ENCODE measurements at regions of chr1 and their contacts with region 1.

Region 1: DNA sequence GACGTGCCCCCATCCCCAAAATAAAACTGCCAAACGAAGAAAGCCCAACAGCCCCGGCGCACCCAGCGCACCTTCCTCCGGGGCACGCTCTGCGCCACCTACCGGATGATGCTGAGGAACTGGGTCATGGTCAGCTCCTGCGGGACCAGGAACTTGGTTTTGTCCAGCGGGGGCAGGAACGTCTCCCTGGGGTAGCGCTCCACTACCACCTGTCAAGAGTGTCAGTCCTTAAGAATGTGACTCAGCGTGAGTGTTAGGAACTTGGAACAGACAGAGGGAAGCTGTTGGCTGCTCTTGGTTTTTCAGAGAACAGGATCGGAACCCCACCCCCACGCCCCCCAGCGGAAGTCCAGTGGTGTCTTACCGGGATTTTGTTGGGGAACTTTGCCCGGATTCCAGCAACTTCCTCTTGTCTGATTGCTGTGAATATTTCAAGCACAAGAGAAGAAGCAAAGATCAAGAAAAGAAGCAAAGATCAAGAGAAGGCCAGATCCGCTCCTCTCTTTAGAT is 431 bp downstream of the MAP1LC3C start:
- DNase-seq: no peak
- H3K4me3 ChIP-seq: peak overlapping the region; percentile 32
- H3K27me3 ChIP-seq: no peaks in the 10 kb centered on the region
- CTCF ChIP-seq: peak; percentile 83

Region 2: GRCh38 chr1:241888232-241888631 is 110.2 kb before region 1 on chr1:
- CTCF ChIA-PET with region 1: interaction called, 11 read pairs
- POLR2A ChIA-PET with region 1: no interaction called
- DNase-seq: no peak
- H3K4me3 ChIP-seq: no peak overlapping the region
- H3K27me3 ChIP-seq: no peaks in the 10 kb centered on the region
- CTCF ChIP-seq: no peak

Region 3: DNA sequence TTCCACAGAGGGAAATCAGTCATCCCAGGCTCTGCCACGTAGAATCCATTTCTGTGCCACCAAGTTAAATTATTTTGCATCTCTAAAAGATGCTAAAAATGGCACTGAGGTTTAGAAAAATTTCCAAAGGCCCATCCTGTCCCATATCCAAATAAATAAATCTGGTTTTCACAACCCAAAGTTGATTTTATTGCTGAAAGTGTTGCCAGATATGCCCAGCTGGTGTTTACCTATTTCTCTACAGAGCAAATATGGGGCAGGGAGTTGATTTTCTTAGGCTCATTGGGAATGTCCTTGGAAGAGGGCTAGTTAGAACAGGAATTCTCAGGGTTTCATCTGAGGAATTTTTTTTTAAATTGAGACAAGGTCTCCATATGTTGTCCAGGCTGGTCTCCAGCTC is 18.5 kb before region 1 on chr1:
- CTCF ChIA-PET with region 1: interaction called, 10 read pairs
- POLR2A ChIA-PET with region 1: no interaction called
- DNase-seq: no peak
- H3K4me3 ChIP-seq: no peak overlapping the region
- H3K27me3 ChIP-seq: no peaks in the 10 kb centered on the region
- CTCF ChIP-seq: no peak

Region 4: DNA sequence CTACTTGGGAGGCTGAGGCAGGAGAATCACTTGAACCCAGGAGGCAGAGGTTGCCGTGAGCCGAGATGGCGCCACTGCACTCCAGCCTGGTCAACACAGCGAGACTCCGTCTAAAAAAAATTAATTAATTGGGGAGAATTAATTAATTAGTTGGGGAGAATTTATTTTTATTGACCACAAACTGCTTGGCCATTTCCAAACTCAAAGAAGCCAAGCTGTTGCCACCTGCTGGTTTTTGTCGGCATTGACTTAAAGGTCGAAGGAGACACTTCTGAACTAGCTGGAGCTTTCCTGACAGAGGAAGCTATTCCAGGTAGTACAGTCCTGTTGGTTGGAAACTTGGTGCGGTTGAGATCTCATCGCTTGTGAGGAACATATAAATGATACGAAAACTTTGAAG is 12.7 kb before region 1 on chr1:
- CTCF ChIA-PET with region 1: interaction called, 15 read pairs
- POLR2A ChIA-PET with region 1: no interaction called
- DNase-seq: no peak
- H3K4me3 ChIP-seq: no peak overlapping the region
- H3K27me3 ChIP-seq: no peaks in the 10 kb centered on the region
- CTCF ChIP-seq: peak; percentile 68

Region 5: DNA sequence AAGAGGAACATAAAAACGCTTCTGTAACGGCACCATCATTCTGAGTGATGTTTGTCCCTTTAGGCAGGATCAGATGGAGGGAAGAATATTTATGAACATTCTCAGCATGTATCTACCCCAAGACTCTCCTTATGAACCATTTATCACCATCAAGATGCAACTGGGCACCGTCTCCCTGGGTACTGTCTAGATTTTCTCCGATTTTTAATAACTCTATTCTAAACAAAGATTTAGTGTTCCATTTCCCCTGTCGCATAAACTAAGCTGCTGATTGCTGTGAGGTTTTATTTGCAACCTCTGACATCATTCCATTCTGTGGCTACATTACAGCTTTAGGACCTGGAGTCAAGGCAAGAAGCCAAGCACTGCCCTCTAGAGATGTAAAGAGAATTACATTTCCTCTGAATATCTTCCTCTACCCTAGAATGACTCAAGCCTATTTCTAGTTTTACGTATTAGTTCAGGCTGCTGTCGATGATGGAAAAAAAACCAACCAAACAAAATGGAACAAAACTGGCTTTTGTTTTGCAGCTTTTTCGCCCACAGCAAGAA is 130.6 kb after region 1 on chr1:
- CTCF ChIA-PET with region 1: no interaction called
- POLR2A ChIA-PET with region 1: no interaction called
- DNase-seq: no peak
- H3K4me3 ChIP-seq: no peak overlapping the region
- H3K27me3 ChIP-seq: no peaks in the 10 kb centered on the region
- CTCF ChIP-seq: no peak